ENCODE measurements at regions of chr17 and their contacts with region 1.

Region 1: GRCh38 chr17:49646391-49647255 is 31.3 kb downstream of the SPOP start:
- DNase-seq: peak in 1 of 2 donors; percentile 82
- H3K4me3 ChIP-seq: peak overlapping the region; percentile 15 to 45
- H3K27ac ChIP-seq: peak overlapping the region; percentile 88 to 94
- H3K4me1 ChIP-seq: peaks cover 7 to 54% of the 10 kb centered on the region in 2 donors
- H3K27me3 ChIP-seq: no peaks in the 10 kb centered on the region
- CTCF ChIP-seq: no peak

Region 2: DNA sequence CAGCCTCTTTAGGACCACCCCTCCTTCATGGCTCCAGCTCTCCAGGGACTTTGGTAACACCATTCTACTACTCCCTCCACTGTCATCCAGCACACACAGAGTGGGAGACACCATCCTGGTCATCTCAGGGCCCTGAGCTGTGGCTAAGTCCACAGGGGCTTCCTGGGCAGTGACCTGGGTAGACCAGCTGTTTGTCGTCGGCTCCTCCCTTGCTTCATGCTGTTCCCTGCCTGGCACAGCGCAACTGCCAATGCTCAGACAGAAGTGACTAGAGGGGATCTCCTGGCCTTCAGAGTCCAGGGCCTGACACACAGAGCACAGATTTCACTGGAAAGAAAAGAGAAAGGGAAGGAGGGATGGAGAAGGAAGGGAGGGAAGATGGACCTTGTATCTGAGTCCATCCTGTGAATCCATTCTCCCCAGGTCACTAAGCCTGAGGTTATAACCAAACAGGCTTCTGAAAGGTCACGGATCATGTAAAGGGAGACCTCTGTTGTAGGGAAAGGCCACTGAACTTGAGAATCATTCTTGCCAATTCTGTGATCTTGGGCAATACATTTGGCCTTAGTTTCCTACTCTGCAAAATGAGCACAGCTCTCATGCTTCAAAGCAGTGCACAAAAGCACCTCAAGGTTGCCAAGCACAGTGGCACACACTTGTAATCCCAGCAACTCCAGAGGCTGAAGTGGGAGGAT is 213.5 kb before region 1 on chr17:
- intact Hi-C with region 1: no loop called
- DNase-seq: no peak
- H3K4me3 ChIP-seq: no peak overlapping the region
- H3K27ac ChIP-seq: no peak overlapping the region
- H3K4me1 ChIP-seq: no peaks in the 10 kb centered on the region
- H3K27me3 ChIP-seq: peaks cover 4% of the 10 kb centered on the region
- CTCF ChIP-seq: no peak

Region 3: GRCh38 chr17:49556223-49556971 is 90.2 kb before region 1 on chr17:
- intact Hi-C with region 1: no loop called
- DNase-seq: peak in 1 of 2 donors; percentile 90
- H3K4me3 ChIP-seq: peak overlapping the region in 1 of 2 donors; percentile 11
- H3K27ac ChIP-seq: no peak overlapping the region
- H3K4me1 ChIP-seq: peaks cover 0 to 2% of the 10 kb centered on the region in 2 donors
- H3K27me3 ChIP-seq: no peaks in the 10 kb centered on the region
- CTCF ChIP-seq: peak; percentile 95 to 97 (median 95)

Region 4: DNA sequence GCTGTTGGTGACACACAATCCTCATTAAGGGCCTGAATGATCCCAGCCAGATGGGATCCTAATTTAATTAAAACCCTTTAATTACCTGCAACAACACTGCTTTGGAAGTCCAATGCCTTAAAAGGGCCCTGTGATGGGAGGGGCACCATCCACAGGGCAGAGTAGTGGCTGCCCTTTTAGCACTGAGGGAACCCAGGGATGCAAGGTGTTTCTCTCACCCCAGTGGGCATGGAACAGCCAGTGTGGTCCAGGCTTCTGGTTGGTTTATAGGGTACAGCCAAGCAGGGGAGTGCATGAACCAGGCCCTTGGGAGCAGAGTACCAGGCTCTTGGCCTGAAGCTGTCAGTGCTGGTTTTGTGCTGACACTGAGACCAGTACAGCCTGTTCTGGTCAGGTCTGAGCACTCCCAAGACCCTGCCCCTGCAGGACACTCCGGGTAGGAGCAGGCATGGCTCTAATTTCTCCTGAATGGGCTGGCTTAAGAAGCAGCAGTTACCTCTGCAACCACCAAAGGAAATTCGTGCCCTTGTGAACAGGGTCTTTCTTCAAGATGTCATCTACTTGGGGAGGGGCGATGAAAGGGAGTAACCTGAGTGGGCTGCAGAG is 61.1 kb before region 1 on chr17:
- intact Hi-C with region 1: no loop called
- DNase-seq: no peak
- H3K4me3 ChIP-seq: no peak overlapping the region
- H3K27ac ChIP-seq: peak overlapping the region; percentile 39 to 48
- H3K4me1 ChIP-seq: peaks cover 3 to 34% of the 10 kb centered on the region in 2 donors
- H3K27me3 ChIP-seq: no peaks in the 10 kb centered on the region
- CTCF ChIP-seq: peak in 1 of 3 experiments; percentile 16

Region 5: DNA sequence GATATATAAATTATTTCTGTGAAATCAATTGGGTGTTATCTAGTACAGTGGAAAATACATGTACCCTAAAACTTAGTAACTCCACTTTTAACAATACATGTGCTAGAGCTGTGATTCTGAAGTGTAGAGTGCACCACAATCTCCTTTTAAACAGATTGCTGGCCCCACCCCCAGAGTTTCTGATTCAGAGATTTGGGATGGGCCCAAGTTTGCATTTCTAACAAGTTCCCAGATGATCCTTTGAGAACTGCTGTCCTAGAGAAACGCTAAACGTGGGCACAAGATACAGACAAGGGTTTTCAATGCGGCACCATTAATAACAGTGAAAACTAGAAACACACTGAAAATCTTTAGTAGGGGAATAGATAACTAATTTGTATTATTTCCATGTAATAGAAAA is 21.7 kb before region 1 on chr17:
- intact Hi-C with region 1: loop called (anchors 2 kb)
- DNase-seq: peak in 1 of 2 donors; percentile 78
- H3K4me3 ChIP-seq: no peak overlapping the region
- H3K27ac ChIP-seq: peak overlapping the region; percentile 28 to 74
- H3K4me1 ChIP-seq: peaks cover 5 to 78% of the 10 kb centered on the region in 2 donors
- H3K27me3 ChIP-seq: no peaks in the 10 kb centered on the region
- CTCF ChIP-seq: no peak

Region 6: GRCh38 chr17:49798182-49798581 is 151.6 kb after region 1 on chr17:
- intact Hi-C with region 1: no loop called
- DNase-seq: no peak
- H3K4me3 ChIP-seq: no peak overlapping the region
- H3K27ac ChIP-seq: no peak overlapping the region
- H3K4me1 ChIP-seq: peaks cover 0 to 6% of the 10 kb centered on the region in 2 donors
- H3K27me3 ChIP-seq: no peaks in the 10 kb centered on the region
- CTCF ChIP-seq: no peak

Measured in ascending aorta (tissue), 2 donors.